Activated CD8-positive, alpha-beta T cell treated with anti-CD3 and anti-CD28 coated beads for 36 hours (primary cell): ENCODE measurements at regions of chr9 and their contacts with region 1.

Region 1: GRCh38 chr9:76393963-76394679 is at the start of gene RFK:
- DNase-seq: peak; percentile 92
- ATAC-seq: peak; percentile 89
- H3K4me3 Mint-ChIP-seq: peak within 1 kb of the TSS; percentile 85
- H3K27ac Mint-ChIP-seq: peak within 1 kb of the TSS; percentile 94
- H3K4me1 Mint-ChIP-seq: peaks cover 27% of the 10 kb centered on the region
- H3K27me3 Mint-ChIP-seq: no peaks in the 10 kb centered on the region
- CTCF ChIP-seq: peak; percentile 29
- total RNA-seq, gene RFK: 6.4 to 9.3 TPM

Region 2: DNA sequence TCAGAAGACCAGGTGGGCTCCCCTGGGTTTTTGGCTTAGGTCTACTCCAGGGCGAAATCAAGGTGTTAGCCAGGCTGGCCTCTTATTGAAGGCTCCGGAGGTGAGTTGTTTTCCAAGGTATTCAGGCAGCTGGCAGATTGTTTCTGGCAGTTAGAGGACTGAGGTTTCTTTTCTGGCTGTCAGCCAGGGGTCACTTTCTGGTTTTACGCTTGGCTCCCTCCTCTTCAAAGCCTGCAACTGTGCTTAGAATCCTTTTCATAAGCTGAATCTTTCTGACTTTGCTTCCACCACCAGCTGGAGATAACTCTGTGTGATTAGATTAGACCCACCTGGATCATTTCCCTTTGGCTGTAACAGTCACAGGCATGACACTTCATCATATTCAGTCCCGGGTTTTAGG is 24.5 kb before region 1 on chr9:
- CTCF ChIA-PET with region 1: no interaction called
- POLR2A ChIA-PET with region 1: no interaction called
- intact Hi-C with region 1: no loop called
- DNase-seq: no peak
- ATAC-seq: no peak
- H3K4me3 Mint-ChIP-seq: no peak overlapping the region
- H3K27ac Mint-ChIP-seq: no peak overlapping the region
- H3K4me1 Mint-ChIP-seq: no peaks in the 10 kb centered on the region
- H3K27me3 Mint-ChIP-seq: no peaks in the 10 kb centered on the region
- CTCF ChIP-seq: no peak

Region 3: GRCh38 chr9:76704593-76705204 is 310.6 kb after region 1 on chr9:
- CTCF ChIA-PET with region 1: interaction called, 22 read pairs
- POLR2A ChIA-PET with region 1: no interaction called
- intact Hi-C with region 1: no loop called
- DNase-seq: no peak
- ATAC-seq: no peak
- H3K4me3 Mint-ChIP-seq: no peak overlapping the region
- H3K27ac Mint-ChIP-seq: no peak overlapping the region
- H3K4me1 Mint-ChIP-seq: no peaks in the 10 kb centered on the region
- H3K27me3 Mint-ChIP-seq: peaks cover 21% of the 10 kb centered on the region
- CTCF ChIP-seq: peak; percentile 83